ENCODE measurements at regions of chr21 and their contacts with region 1.

Region 1: DNA sequence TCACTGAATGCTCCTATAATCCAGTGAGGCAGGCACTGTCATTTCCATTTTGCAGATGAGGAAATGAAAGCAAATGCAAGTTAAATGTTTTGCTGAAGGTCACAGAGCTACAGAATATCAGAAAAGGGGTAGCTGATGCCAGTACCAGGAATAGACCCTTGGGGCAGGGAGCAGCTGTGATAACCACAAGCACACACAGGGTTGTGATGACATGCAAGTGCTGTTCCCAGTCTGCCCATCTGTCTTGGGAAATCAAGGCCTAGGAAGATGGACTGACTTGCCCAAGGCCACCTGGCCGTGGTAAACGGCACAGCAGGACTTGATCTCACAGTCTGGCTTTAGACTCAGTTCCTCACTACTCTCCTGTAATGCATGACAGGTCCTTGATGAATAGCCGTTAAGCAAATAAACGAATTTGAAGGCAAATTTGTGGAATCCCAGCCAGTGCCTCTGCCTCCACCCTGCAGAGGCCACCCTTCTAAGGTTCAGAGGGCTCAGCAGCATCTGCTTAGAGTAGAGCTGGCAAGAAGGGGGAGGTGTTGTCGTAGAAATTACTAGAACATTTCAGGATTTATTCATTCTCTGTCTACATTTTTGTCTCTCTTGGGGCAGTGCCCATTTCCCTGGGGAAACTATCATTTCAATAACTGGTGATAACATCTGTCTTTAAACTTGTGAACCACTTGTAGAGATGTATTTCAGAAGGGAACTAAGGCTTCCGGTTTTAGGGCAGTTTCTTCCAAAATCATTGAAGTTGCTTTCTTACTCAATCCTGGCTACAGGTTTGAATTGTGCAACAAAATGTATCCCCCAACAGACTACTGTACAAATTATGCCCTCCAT is 53.2 kb upstream of the MRPS6 start:
- DNase-seq: no peak
- H3K4me3 Mint-ChIP-seq: no peak overlapping the region
- H3K27ac Mint-ChIP-seq: no peak overlapping the region
- H3K4me1 Mint-ChIP-seq: peaks cover 20% of the 10 kb centered on the region
- H3K27me3 Mint-ChIP-seq: no peaks in the 10 kb centered on the region

Region 2: GRCh38 chr21:33825915-33826314 is 194.3 kb before region 1 on chr21:
- CTCF ChIA-PET with region 1: no interaction called
- POLR2A ChIA-PET with region 1: no interaction called
- intact Hi-C with region 1: no loop called
- DNase-seq: no peak
- H3K4me3 Mint-ChIP-seq: no peak overlapping the region
- H3K27ac Mint-ChIP-seq: no peak overlapping the region
- H3K4me1 Mint-ChIP-seq: no peaks in the 10 kb centered on the region
- H3K27me3 Mint-ChIP-seq: no peaks in the 10 kb centered on the region

Region 3: GRCh38 chr21:33931799-33932390 is 88.3 kb before region 1 on chr21:
- CTCF ChIA-PET with region 1: no interaction called
- POLR2A ChIA-PET with region 1: no interaction called
- intact Hi-C with region 1: loop called (anchors 5 kb)
- DNase-seq: no peak
- H3K4me3 Mint-ChIP-seq: peak overlapping the region; percentile 92
- H3K27ac Mint-ChIP-seq: peak overlapping the region; percentile 99
- H3K4me1 Mint-ChIP-seq: peaks cover 41% of the 10 kb centered on the region
- H3K27me3 Mint-ChIP-seq: no peaks in the 10 kb centered on the region

Region 4: DNA sequence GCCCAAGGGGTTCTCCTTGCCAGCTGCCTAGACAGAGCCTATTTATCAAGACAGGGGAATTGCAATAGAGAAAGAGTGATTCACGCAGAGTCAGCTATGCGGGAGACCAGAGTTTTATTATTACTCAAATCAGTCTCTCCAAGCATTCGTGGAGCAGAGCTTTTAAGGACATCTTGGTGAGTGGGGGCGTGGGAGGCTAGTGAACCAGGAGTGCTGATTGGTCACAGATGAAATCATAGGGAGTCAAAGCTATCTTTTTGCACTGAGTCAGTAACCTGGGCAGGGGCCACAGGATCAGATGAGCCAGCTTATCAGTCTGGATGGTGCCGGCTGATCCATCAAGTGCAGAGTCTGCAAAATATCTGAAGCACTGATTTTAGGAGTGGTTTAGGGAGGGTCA is 11.6 kb before region 1 on chr21:
- CTCF ChIA-PET with region 1: interaction called, 3 read pairs
- POLR2A ChIA-PET with region 1: interaction called, 7 read pairs
- intact Hi-C with region 1: loop called (anchors 1 kb)
- DNase-seq: peak; percentile 90
- H3K4me3 Mint-ChIP-seq: no peak overlapping the region
- H3K27ac Mint-ChIP-seq: peak overlapping the region; percentile 42
- H3K4me1 Mint-ChIP-seq: peaks cover 19% of the 10 kb centered on the region
- H3K27me3 Mint-ChIP-seq: no peaks in the 10 kb centered on the region

Measured in activated CD4-positive, alpha-beta memory T cell treated with anti-CD3 and anti-CD28 coated beads for 36 hours (primary cell).